CD8-positive, alpha-beta T cell (primary cell): ENCODE measurements at regions of chr3 and their contacts with region 1.

Region 1: GRCh38 chr3:119676771-119677640 is at the start of gene COX17:
- DNase-seq: peak; percentile 92 to 99 (median 96)
- ATAC-seq: peak; percentile 86
- H3K4me3 ChIP-seq: peak within 1 kb of the TSS; percentile 26 to 79
- H3K4me3 Mint-ChIP-seq: peak within 1 kb of the TSS; percentile 87
- H3K27ac ChIP-seq: peak within 1 kb of the TSS; percentile 49 to 95
- H3K27ac Mint-ChIP-seq: peak within 1 kb of the TSS; percentile 96
- H3K4me1 ChIP-seq: peaks cover 20% of the 10 kb centered on the region
- H3K4me1 Mint-ChIP-seq: peaks cover 35% of the 10 kb centered on the region
- H3K27me3 ChIP-seq: no peaks in the 10 kb centered on the region
- H3K27me3 Mint-ChIP-seq: no peaks in the 10 kb centered on the region
- CTCF ChIP-seq: no peak
- total RNA-seq, gene COX17: 22.4 to 23.2 TPM

Region 2: GRCh38 chr3:119145500-119146191 is 531.4 kb before region 1 on chr3 and contains the start of gene TEX55:
- CTCF ChIA-PET with region 1: no interaction called
- POLR2A ChIA-PET with region 1: no interaction called
- intact Hi-C with region 1: loop called in 1 of 2 experiments (anchors 2 kb)
- DNase-seq: peak in 2 of 9 experiments; percentile 25 to 39
- ATAC-seq: peak; percentile 46
- H3K4me3 ChIP-seq: no peak within 1 kb of the TSS
- H3K4me3 Mint-ChIP-seq: no peak within 1 kb of the TSS
- H3K27ac ChIP-seq: no peak within 1 kb of the TSS
- H3K27ac Mint-ChIP-seq: no peak within 1 kb of the TSS
- H3K4me1 ChIP-seq: no peaks in the 10 kb centered on the region
- H3K4me1 Mint-ChIP-seq: peaks cover 2% of the 10 kb centered on the region
- H3K27me3 ChIP-seq: no peaks in the 10 kb centered on the region
- H3K27me3 Mint-ChIP-seq: no peaks in the 10 kb centered on the region
- CTCF ChIP-seq: peak; percentile 54
- total RNA-seq, gene TEX55: not detected

Region 3: GRCh38 chr3:119279101-119279554 is 397.9 kb before region 1 on chr3:
- CTCF ChIA-PET with region 1: interaction called, 5 read pairs
- POLR2A ChIA-PET with region 1: no interaction called
- intact Hi-C with region 1: loop called in 1 of 2 experiments (anchors 5 kb)
- DNase-seq: no peak
- ATAC-seq: no peak
- H3K4me3 ChIP-seq: no peak overlapping the region
- H3K4me3 Mint-ChIP-seq: no peak overlapping the region
- H3K27ac ChIP-seq: no peak overlapping the region
- H3K27ac Mint-ChIP-seq: no peak overlapping the region
- H3K4me1 ChIP-seq: no peaks in the 10 kb centered on the region
- H3K4me1 Mint-ChIP-seq: peaks cover 4% of the 10 kb centered on the region
- H3K27me3 ChIP-seq: no peaks in the 10 kb centered on the region
- H3K27me3 Mint-ChIP-seq: no peaks in the 10 kb centered on the region
- CTCF ChIP-seq: no peak

Region 4: DNA sequence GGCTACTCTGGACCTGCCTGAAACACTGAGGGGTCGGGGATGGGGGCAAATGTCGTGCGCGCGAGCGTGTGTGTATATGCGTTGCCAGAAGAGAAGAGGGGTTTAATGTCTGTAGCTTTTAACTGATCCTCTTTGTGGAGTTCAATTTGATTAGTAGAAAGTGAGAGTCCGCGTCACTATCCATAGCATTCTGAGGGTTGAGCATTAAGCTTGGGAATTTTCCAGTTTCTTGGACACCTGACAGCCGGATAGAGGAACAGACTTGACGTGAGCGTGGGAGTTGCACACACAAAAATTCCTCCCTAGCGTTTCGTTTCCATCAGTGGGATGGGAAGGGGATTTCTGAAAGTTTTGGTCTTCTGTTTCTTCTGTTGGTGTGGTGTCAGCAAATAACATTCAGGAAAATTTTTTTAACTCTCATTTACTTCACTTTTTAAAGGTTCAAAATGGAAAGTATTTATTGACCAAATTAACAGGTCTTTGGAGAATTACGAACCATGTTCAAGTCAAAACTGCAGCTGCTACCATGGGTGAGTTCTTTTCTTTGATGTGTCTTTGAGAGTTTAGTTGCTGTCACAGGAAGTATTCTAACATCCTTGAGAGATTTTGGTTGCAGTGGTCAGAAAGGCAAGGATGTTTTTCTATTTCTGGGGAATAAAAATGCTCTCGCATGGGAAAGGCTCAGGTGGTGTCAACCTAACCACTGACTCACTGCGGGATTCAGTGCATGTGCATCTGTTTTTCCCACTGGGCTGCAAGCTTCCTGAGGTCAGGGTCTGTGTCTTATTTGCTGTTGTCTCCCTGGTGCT is 207.4 kb before region 1 on chr3:
- CTCF ChIA-PET with region 1: no interaction called
- POLR2A ChIA-PET with region 1: interaction called, 7 read pairs
- intact Hi-C with region 1: loop called in 1 of 2 experiments (anchors 2 kb)
- DNase-seq: peak in 3 of 9 experiments; percentile 20 to 46 (median 22)
- ATAC-seq: peak; percentile 32
- H3K4me3 ChIP-seq: peak overlapping the region; percentile 79 to 84
- H3K4me3 Mint-ChIP-seq: peak overlapping the region; percentile 91
- H3K27ac ChIP-seq: peak overlapping the region; percentile 67 to 72
- H3K27ac Mint-ChIP-seq: peak overlapping the region; percentile 88
- H3K4me1 ChIP-seq: peaks cover 21% of the 10 kb centered on the region
- H3K4me1 Mint-ChIP-seq: peaks cover 33% of the 10 kb centered on the region
- H3K27me3 ChIP-seq: no peaks in the 10 kb centered on the region
- H3K27me3 Mint-ChIP-seq: no peaks in the 10 kb centered on the region
- CTCF ChIP-seq: no peak

Region 5: DNA sequence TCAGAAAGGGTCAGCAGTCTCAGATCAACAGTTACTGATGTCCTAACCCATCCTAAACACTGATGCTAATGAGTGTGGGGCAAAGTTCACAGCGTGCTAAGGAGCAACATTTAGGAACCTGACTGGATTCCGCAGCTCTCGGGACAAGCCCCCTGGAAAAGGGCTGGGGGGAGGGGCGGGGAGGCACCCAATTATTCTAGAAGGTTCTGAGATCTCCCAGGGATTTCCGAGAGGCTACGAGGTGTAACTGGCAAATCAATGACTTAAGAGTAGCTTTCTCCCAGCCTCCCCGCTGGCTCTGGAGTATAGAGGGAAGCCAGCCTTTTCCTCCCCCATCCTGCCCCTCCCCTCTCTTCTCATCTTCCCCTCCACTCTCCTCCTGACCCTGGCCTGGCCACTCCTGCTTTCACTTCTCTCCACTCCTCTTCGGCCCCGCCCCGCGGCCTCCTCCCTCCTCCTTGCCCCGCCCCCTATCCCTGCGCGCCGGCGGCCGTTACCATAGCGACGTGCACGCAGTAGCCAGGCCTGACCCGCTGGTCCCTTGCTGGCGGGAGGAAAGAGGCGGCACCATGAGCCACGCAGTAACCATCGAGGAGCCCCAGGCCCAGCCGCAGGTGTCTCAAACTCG is 25.6 kb after region 1 on chr3 and contains the start of gene CFAP91:
- CTCF ChIA-PET with region 1: no interaction called
- POLR2A ChIA-PET with region 1: interaction called, 3 read pairs
- intact Hi-C with region 1: loop called in 1 of 2 experiments (anchors 1 kb)
- DNase-seq: peak; percentile 61 to 89 (median 79)
- ATAC-seq: peak; percentile 89
- H3K4me3 ChIP-seq: peak within 1 kb of the TSS; percentile 54 to 62
- H3K4me3 Mint-ChIP-seq: peak within 1 kb of the TSS; percentile 79
- H3K27ac ChIP-seq: no peak within 1 kb of the TSS
- H3K27ac Mint-ChIP-seq: no peak within 1 kb of the TSS
- H3K4me1 ChIP-seq: peaks cover 18% of the 10 kb centered on the region
- H3K4me1 Mint-ChIP-seq: peaks cover 31% of the 10 kb centered on the region
- H3K27me3 ChIP-seq: no peaks in the 10 kb centered on the region
- H3K27me3 Mint-ChIP-seq: peaks cover 5% of the 10 kb centered on the region
- CTCF ChIP-seq: no peak
- total RNA-seq, gene CFAP91: not detected

Region 6: DNA sequence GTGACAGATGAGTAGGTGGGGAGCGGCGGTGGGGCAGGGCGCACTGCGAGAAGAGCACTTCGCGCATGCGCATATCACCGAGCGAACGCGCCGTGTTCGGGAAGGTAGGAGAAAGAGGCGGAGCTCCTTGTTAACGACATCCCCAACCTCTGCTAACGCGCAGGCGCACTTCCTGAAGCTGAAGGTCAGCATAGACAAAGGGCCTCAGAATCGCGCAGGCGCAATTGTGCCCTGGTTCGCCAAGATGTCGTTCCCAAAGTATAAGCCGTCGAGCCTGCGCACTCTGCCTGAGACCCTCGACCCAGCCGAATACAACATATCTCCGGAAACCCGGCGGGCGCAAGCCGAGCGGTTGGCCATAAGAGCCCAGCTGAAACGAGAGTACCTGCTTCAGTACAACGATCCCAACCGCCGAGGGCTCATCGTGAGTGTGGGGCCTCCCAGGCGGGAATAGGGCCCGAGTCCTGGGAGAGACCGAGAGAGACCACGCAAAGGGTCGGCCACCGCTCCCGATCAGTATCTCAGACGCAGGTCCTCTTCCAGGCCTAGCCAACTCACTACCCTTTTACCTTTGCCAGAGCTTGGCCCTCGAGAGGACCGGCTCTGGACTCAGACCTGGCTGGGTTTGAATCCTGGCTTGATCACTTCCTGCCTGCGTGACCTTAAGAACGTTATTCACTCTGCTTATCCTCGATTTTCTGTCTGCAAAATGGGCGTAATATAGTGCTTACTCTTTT is 919.3 kb after region 1 on chr3 and contains the start of gene NDUFB4:
- CTCF ChIA-PET with region 1: no interaction called
- POLR2A ChIA-PET with region 1: no interaction called
- intact Hi-C with region 1: loop called in 1 of 2 experiments (anchors 10 kb)
- DNase-seq: peak; percentile 87 to 99 (median 95)
- ATAC-seq: peak; percentile 92
- H3K4me3 ChIP-seq: peak within 1 kb of the TSS; percentile 77 to 92
- H3K4me3 Mint-ChIP-seq: peak within 1 kb of the TSS; percentile 94
- H3K27ac ChIP-seq: peak within 1 kb of the TSS; percentile 91 to 95
- H3K27ac Mint-ChIP-seq: peak within 1 kb of the TSS; percentile 97
- H3K4me1 ChIP-seq: peaks cover 34% of the 10 kb centered on the region
- H3K4me1 Mint-ChIP-seq: peaks cover 12% of the 10 kb centered on the region
- H3K27me3 ChIP-seq: no peaks in the 10 kb centered on the region
- H3K27me3 Mint-ChIP-seq: no peaks in the 10 kb centered on the region
- CTCF ChIP-seq: no peak
- total RNA-seq, gene NDUFB4: 63.2 to 71.5 TPM